GM12878 (cell line): ENCODE measurements at regions of chr11 and their contacts with region 1.

Region 1: DNA sequence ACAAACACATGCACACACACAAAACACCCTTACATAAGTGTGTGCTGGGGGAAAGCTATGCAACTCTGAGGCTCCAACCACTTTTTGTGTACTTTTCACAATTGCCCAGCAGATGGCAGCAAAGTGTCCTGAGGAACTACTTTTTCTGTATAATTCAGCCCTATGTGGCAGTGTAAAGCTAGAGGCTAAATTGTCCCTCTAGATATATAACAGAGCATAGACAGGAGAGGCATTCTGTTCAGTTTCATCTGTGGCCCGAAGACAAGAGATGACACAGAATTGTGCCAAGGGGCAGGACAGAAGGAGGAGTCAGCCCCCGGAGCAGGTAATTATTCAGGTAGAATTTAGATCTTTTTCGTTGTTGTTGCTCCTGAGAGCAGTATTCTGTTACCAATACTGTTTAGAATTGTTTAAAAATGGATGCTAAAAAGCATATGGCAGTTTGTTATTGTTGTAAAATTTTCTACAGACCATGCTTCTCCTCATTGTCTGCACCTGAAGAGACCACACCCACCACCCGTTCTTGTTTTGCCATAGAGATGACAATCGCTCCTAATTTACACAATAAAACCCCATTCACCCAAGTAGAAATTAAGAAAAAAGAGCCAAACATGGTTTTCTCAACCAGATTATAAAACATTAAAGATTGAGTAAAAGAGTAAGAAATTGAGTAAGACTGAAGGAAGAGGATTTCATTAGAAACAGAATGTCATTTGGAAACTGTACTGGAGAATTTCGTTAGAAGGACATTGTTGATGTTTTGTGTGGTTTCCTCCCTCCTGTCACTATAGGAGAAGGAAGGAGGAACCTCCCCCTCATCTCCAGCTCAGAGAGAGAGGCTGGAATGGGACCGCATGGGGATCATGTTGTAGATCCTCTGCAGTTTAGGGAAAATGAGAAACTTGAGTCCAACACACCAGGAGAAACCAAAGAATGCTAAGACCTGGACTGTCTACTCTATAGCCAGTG is 14.5 kb upstream of the MS4A7 start:
- DNase-seq: peak; percentile 88
- ATAC-seq: peak; percentile 92
- H3K4me3 ChIP-seq: peak overlapping the region; percentile 52; the same call in 1 of the 2 replicates
- H3K27ac ChIP-seq: peak overlapping the region; percentile 36
- H3K4me1 ChIP-seq: peaks cover 14% of the 10 kb centered on the region; the same call in 1 of the 2 replicates
- H3K27me3 ChIP-seq: no peaks in the 10 kb centered on the region
- CTCF ChIP-seq: peak; percentile 63 to 92 (median 78); a peak in 5 of 6 replicates
- EP300 ChIP-seq: no peak
- POLR2A ChIP-seq: no peak
- RAD21 ChIP-seq: peak; percentile 95

Region 2: DNA sequence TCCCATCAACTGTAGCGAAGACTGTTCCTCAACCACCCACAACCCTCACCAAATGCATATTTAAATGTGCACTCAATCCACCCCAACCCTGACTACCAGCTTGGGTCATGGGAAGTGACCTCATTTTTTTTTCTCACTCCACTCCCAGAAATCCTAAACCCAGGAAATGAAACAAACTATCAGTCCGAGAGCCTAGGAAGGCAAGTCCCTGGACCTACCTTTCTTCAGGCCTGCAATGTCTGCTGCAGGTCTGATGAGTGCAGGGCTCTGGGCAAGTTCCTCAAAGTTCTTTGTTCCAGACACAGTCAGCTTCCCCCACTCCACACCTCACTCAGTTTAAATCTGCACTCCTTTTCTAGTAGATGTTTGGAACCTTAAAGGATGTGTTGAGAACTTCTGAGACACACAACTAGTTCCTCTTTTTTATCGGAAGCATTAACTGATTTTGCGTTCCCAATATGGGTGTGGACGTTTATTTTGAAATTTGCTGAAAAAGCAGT is 121.0 kb before region 1 on chr11 and contains the start of gene MS4A4E:
- CTCF ChIA-PET with region 1: no interaction called
- POLR2A ChIA-PET with region 1: no interaction called
- RAD21 ChIA-PET with region 1: no interaction called
- SMC1A ChIA-PET with region 1: no interaction called
- in situ Hi-C with region 1: no loop called
- intact Hi-C with region 1: no loop called
- DNase-seq: no peak
- ATAC-seq: no peak; the same call in 2 of the 3 replicates
- H3K4me3 ChIP-seq: no peak within 1 kb of the TSS
- H3K27ac ChIP-seq: no peak within 1 kb of the TSS
- H3K4me1 ChIP-seq: no peaks in the 10 kb centered on the region
- H3K27me3 ChIP-seq: no peaks in the 10 kb centered on the region
- CTCF ChIP-seq: no peak
- EP300 ChIP-seq: no peak
- POLR2A ChIP-seq: no peak
- RAD21 ChIP-seq: no peak
- polyA plus RNA-seq, gene MS4A4E: 0.22 to 0.45 TPM

Region 3: GRCh38 chr11:60265373-60266214 is 98.2 kb before region 1 on chr11:
- CTCF ChIA-PET with region 1: interaction called, 45 read pairs
- POLR2A ChIA-PET with region 1: no interaction called
- RAD21 ChIA-PET with region 1: interaction called, 30 read pairs
- SMC1A ChIA-PET with region 1: interaction called, 41 read pairs
- in situ Hi-C with region 1: no loop called
- intact Hi-C with region 1: loop called (anchors 1 kb)
- DNase-seq: peak; percentile 44
- ATAC-seq: peak; percentile 76
- H3K4me3 ChIP-seq: no peak overlapping the region
- H3K27ac ChIP-seq: no peak overlapping the region
- H3K4me1 ChIP-seq: no peaks in the 10 kb centered on the region
- H3K27me3 ChIP-seq: no peaks in the 10 kb centered on the region
- CTCF ChIP-seq: peak; percentile 49 to 80 (median 74); a peak in 5 of 6 replicates
- EP300 ChIP-seq: no peak
- POLR2A ChIP-seq: no peak
- RAD21 ChIP-seq: peak; percentile 96

Region 4: DNA sequence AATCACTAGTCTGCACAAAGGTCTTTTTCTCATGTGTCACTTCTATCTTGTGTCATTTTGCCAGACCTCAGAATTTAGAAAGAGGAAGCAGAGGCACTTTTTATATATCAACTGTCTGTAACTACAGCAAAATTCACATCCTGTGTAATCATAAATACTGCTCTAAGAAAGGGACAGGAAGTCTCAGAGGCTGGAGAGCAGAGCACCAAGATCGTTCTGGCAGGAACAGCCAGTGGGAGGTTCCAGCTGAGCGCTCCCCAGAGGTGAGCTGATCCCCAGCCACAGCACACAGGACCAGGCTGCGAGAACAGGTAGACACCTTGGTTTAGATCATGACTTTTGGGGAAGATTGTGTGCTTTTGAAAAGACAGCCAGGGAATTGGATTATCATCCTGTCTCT is 14.5 kb after region 1 on chr11 and contains the start of gene MS4A7:
- CTCF ChIA-PET with region 1: interaction called, 16 read pairs
- POLR2A ChIA-PET with region 1: interaction called, 10 read pairs
- RAD21 ChIA-PET with region 1: interaction called, 16 read pairs
- SMC1A ChIA-PET with region 1: interaction called, 124 read pairs
- in situ Hi-C with region 1: no loop called
- intact Hi-C with region 1: no loop called
- DNase-seq: peak; percentile 93
- ATAC-seq: peak; percentile 94
- H3K4me3 ChIP-seq: peak within 1 kb of the TSS; percentile 45; the same call in 1 of the 2 replicates
- H3K27ac ChIP-seq: peak within 1 kb of the TSS; percentile 79
- H3K4me1 ChIP-seq: peaks cover 17% of the 10 kb centered on the region
- H3K27me3 ChIP-seq: no peaks in the 10 kb centered on the region
- CTCF ChIP-seq: no peak
- EP300 ChIP-seq: peak; percentile 27 to 49; a peak in 2 of 4 replicates
- POLR2A ChIP-seq: peak; percentile 60
- RAD21 ChIP-seq: peak; percentile 22; the same call in 1 of the 2 replicates
- polyA plus RNA-seq, gene MS4A7: 7.2 to 17.0 TPM

Region 5: DNA sequence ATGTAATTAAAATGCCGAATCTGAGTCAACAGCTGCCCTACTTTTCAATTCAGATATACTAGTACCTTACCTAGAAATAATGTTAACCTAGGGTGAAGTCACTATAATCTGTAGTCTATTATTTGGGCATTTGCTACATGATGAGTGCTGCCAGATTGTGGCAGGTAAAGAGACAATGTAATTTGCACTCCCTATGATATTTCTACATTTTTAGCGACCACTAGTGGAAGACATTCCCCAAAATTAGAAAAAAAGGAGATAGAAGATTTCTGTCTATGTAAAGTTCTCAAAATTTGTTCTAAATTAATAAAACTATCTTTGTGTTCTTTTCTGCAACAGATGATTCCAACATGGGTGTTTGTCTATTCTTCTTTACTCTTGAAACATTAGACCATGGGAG is 105.9 kb after region 1 on chr11:
- CTCF ChIA-PET with region 1: interaction called, 18 read pairs
- POLR2A ChIA-PET with region 1: interaction called, 3 read pairs
- RAD21 ChIA-PET with region 1: interaction called, 15 read pairs
- SMC1A ChIA-PET with region 1: interaction called, 30 read pairs
- in situ Hi-C with region 1: loop called (anchors 10 kb)
- intact Hi-C with region 1: no loop called
- DNase-seq: no peak
- ATAC-seq: peak; percentile 22; the same call in 2 of the 3 replicates
- H3K4me3 ChIP-seq: no peak overlapping the region
- H3K27ac ChIP-seq: no peak overlapping the region
- H3K4me1 ChIP-seq: no peaks in the 10 kb centered on the region
- H3K27me3 ChIP-seq: no peaks in the 10 kb centered on the region
- CTCF ChIP-seq: peak in 1 of 3 experiments; percentile 16; a peak in 2 of 6 replicates
- EP300 ChIP-seq: no peak
- POLR2A ChIP-seq: no peak
- RAD21 ChIP-seq: peak; percentile 24; the same call in 1 of the 2 replicates

Region 6: GRCh38 chr11:60498399-60498798 is 134.6 kb after region 1 on chr11:
- CTCF ChIA-PET with region 1: interaction called, 13 read pairs
- POLR2A ChIA-PET with region 1: no interaction called
- RAD21 ChIA-PET with region 1: interaction called, 11 read pairs
- SMC1A ChIA-PET with region 1: interaction called, 13 read pairs
- in situ Hi-C with region 1: no loop called
- intact Hi-C with region 1: no loop called
- DNase-seq: no peak
- ATAC-seq: peak; percentile 69
- H3K4me3 ChIP-seq: 0 out of 2 replicates have a peak overlapping the region, but pooled peaks have one; percentile 7
- H3K27ac ChIP-seq: peak overlapping the region; percentile 27
- H3K4me1 ChIP-seq: peaks cover 20% of the 10 kb centered on the region
- H3K27me3 ChIP-seq: no peaks in the 10 kb centered on the region
- CTCF ChIP-seq: no peak
- EP300 ChIP-seq: no peak
- POLR2A ChIP-seq: no peak
- RAD21 ChIP-seq: no peak

Region 7: GRCh38 chr11:60634126-60634525 is 270.3 kb after region 1 on chr11:
- CTCF ChIA-PET with region 1: interaction called, 7 read pairs
- POLR2A ChIA-PET with region 1: no interaction called
- RAD21 ChIA-PET with region 1: interaction called, 25 read pairs
- SMC1A ChIA-PET with region 1: interaction called, 9 read pairs
- in situ Hi-C with region 1: no loop called
- intact Hi-C with region 1: loop called (anchors 5 kb)
- DNase-seq: peak; percentile 19
- ATAC-seq: peak; percentile 85
- H3K4me3 ChIP-seq: no peak overlapping the region
- H3K27ac ChIP-seq: 0 out of 2 replicates have a peak overlapping the region, but pooled peaks have one; percentile 2
- H3K4me1 ChIP-seq: peaks cover 27% of the 10 kb centered on the region
- H3K27me3 ChIP-seq: no peaks in the 10 kb centered on the region
- CTCF ChIP-seq: peak; percentile 43 to 60 (median 56)
- EP300 ChIP-seq: no peak
- POLR2A ChIP-seq: no peak
- RAD21 ChIP-seq: peak; percentile 76